CD4-positive, alpha-beta T cell (primary cell): ENCODE measurements at regions of chr11 and their contacts with region 1.

Region 1: DNA sequence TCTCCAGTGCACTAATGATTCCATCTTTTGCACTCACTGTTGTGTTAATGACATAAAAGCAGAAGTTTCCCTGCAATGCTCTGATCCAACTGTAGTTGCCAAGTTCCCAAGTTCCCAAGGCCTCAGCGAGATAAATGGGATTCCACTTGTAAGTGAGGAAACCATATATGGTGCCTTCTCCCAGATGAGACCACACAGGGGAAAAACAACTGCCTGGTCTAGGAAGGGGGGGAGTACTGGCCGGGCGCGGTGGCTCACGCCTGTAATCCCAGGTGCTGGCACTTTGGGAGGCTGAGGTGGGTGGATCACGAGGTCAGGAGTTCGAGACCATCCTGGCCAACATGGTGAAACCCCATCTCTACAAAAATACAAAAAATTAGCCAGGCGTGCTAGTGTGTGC is 23.3 kb upstream of the RELA start:
- DNase-seq: no peak
- ATAC-seq: no peak
- H3K4me3 ChIP-seq: no peak overlapping the region
- H3K4me3 Mint-ChIP-seq: no peak overlapping the region
- H3K27ac ChIP-seq: no peak overlapping the region
- H3K27ac Mint-ChIP-seq: no peak overlapping the region
- H3K4me1 ChIP-seq: no peaks in the 10 kb centered on the region
- H3K4me1 Mint-ChIP-seq: no peaks in the 10 kb centered on the region
- H3K27me3 ChIP-seq: no peaks in the 10 kb centered on the region
- H3K27me3 Mint-ChIP-seq: peaks cover 5% of the 10 kb centered on the region
- CTCF ChIP-seq: no peak

Region 2: DNA sequence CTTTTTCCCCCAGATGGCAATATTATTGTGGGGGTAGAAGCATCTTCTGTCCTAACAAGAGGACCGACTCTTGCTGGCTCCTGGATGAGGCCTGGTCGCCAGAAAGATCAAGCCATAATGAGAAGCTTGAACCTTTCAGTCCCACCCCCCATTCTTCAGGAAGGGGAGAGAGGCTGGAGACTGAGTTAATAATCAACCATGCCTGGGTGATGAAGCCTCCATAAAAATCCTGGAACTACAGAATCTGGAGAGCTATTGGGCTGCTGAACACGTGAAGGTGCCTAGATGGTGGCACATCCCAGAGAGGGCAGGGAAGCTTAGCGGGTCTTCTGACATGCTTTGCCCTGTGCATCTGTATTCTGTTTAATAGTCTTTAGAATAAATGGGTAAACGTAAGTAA is 78.5 kb after region 1 on chr11:
- CTCF ChIA-PET with region 1: no interaction called
- POLR2A ChIA-PET with region 1: no interaction called
- intact Hi-C with region 1: loop called in 1 of 2 experiments (anchors 5 kb)
- DNase-seq: no peak
- ATAC-seq: no peak
- H3K4me3 ChIP-seq: no peak overlapping the region
- H3K4me3 Mint-ChIP-seq: no peak overlapping the region
- H3K27ac ChIP-seq: no peak overlapping the region
- H3K27ac Mint-ChIP-seq: no peak overlapping the region
- H3K4me1 ChIP-seq: no peaks in the 10 kb centered on the region
- H3K4me1 Mint-ChIP-seq: peaks cover under 1% of the 10 kb centered on the region
- H3K27me3 ChIP-seq: peaks cover 4 to 6% of the 10 kb centered on the region in 2 experiments
- H3K27me3 Mint-ChIP-seq: peaks cover 23% of the 10 kb centered on the region
- CTCF ChIP-seq: no peak